HepG2 (cell line): ENCODE measurements at regions of chr14 and their contacts with region 1.

Region 1: DNA sequence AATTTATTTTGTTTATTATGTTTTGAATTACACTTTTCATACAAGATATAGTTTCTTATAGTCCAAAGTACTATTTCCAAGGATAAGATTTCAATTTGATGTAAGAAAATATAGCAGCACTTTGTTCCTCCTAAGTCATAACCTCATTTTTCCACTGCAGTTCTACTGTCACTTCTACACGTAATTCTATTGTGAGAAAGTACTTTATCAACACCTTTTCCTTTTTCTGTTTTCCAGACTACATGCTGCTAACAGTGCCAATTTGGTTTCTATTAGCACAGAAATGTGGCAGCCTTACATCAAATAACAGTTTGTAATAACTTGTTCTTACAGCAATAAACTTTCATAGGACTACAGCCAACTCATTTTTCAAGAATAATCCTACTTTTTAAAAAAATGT is 45.0 kb downstream of the RPS6KA5 start:
- DNase-seq: no peak
- ATAC-seq: no peak
- H3K4me3 ChIP-seq: no peak overlapping the region
- H3K27ac ChIP-seq: no peak overlapping the region
- H3K4me1 ChIP-seq: no peaks in the 10 kb centered on the region
- H3K27me3 ChIP-seq: no peaks in the 10 kb centered on the region; a peak in 1 of 5 replicates
- CTCF ChIP-seq: no peak
- EP300 ChIP-seq: no peak
- POLR2A ChIP-seq: no peak
- RAD21 ChIP-seq: no peak

Region 2: DNA sequence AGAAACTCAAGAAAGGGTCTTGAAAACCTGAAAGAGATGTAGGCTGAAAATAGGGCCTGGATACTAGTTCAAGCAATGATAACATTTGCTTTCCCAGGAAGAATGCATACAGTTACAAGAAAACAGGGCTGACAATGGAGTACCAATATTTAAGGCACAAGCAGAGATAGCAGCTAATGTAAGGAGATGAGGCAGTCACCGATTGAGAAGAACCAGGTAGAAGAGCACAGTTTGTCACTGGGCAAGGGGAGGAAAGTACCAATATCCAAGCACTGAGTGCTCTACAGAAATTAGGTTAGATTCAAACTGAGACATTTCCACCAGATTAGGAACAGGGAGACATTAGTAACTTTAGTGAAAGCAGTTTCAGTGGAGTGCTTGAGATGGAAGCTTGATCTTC is 25.1 kb after region 1 on chr14:
- CTCF ChIA-PET with region 1: no interaction called
- POLR2A ChIA-PET with region 1: no interaction called
- in situ Hi-C with region 1: no loop called
- intact Hi-C with region 1: loop called (anchors 1 kb)
- DNase-seq: no peak
- ATAC-seq: no peak
- H3K4me3 ChIP-seq: no peak overlapping the region
- H3K27ac ChIP-seq: no peak overlapping the region
- H3K4me1 ChIP-seq: no peaks in the 10 kb centered on the region
- H3K27me3 ChIP-seq: no peaks in the 10 kb centered on the region
- CTCF ChIP-seq: no peak
- EP300 ChIP-seq: no peak
- POLR2A ChIP-seq: no peak
- RAD21 ChIP-seq: no peak